A549 (cell line): ENCODE measurements at regions of chr3 and their contacts with region 1.

Region 1: GRCh38 chr3:129399145-129399894 is 29.1 kb downstream of the EFCAB12 start:
- DNase-seq: peak; percentile 83 to 95
- ATAC-seq: peak; percentile 90 to 93
- H3K4me3 ChIP-seq: peak overlapping the region; percentile 72
- H3K27ac ChIP-seq: peak overlapping the region; percentile 94 to 97
- H3K4me1 ChIP-seq: peaks cover 34% of the 10 kb centered on the region
- CTCF ChIP-seq: peak; percentile 67
- EP300 ChIP-seq: no peak
- POLR2A ChIP-seq: no peak
- RAD21 ChIP-seq: peak; percentile 31 to 32; a peak in 2 of 5 replicates

Region 2: GRCh38 chr3:129413687-129414506 is 14.6 kb after region 1 on chr3:
- CTCF ChIA-PET with region 1: interaction called, 16 read pairs
- POLR2A ChIA-PET with region 1: interaction called, 16 read pairs
- DNase-seq: peak; percentile 67 to 87
- ATAC-seq: peak; percentile 93 to 94
- H3K4me3 ChIP-seq: no peak overlapping the region
- H3K27ac ChIP-seq: peak overlapping the region; percentile 93 to 94
- H3K4me1 ChIP-seq: peaks cover 52% of the 10 kb centered on the region
- CTCF ChIP-seq: no peak
- EP300 ChIP-seq: no peak
- POLR2A ChIP-seq: no peak
- RAD21 ChIP-seq: no peak

Region 3: DNA sequence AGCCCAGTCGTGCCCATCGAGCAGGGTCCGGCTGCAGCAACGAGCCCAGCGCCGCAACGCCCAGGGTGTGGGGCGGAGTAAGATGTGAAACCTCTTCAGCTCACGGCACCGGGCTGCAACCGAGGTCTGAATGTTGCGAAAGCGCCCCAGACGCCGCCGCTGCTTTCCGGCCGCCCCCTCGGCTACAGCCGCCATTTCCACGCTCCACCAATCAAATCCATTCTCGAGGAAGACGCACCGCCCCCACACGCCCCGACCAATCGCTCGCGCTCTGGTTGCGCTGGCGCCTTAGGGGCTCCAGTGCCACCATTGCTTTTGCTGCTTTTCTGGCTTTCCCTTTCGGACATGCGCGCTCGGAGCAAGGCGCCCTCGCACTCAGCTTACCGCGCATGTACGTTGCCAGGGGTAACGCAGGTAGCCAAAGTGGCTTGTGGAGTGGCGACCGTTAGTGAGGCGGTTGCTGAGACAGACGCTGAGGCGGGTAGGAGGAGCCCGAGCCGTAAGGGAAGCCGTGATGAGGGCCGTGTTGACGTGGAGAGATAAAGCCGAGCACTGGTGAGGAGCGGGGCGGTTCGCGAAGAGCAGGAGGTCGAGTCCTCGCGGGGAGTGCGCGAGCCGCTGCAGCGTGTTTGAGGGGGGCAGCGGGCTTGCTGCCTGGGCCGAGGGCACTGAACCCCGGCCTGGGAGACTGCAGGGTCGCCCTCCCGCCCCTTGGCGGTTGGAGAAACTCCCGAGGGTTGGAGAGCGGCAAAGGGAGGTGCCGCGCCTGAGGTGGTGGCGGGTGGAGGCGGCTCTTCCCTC is 40.7 kb after region 1 on chr3 and contains the starts of genes IFT122 and MBD4:
- CTCF ChIA-PET with region 1: interaction called, 5 read pairs
- POLR2A ChIA-PET with region 1: interaction called, 17 read pairs
- DNase-seq: peak; percentile 98
- ATAC-seq: peak; percentile 94 to 95
- H3K4me3 ChIP-seq: peak within 1 kb of the TSS; percentile 86
- H3K27ac ChIP-seq: peak within 1 kb of the TSS; percentile 94 to 99
- H3K4me1 ChIP-seq: peaks cover 40% of the 10 kb centered on the region; the same call in 2 of the 3 replicates
- CTCF ChIP-seq: no peak
- EP300 ChIP-seq: no peak
- POLR2A ChIP-seq: peak; percentile 78
- RAD21 ChIP-seq: no peak
- polyA plus RNA-seq, gene IFT122: 17.1 and 20.3 TPM in 2 replicates
- polyA plus RNA-seq, gene MBD4: 38.2 and 49.7 TPM in 2 replicates